Activated CD4-positive, alpha-beta T cell treated with anti-CD3 and anti-CD28 coated beads for 36 hours (primary cell): ENCODE measurements at regions of chr16 and their contacts with region 1.

Region 1: GRCh38 chr16:85935974-85936760 is 37.2 kb downstream of the IRF8 start:
- DNase-seq: peak; percentile 90
- ATAC-seq: peak; percentile 83
- H3K4me3 Mint-ChIP-seq: peak overlapping the region; percentile 49
- H3K27ac Mint-ChIP-seq: peak overlapping the region; percentile 84
- H3K4me1 Mint-ChIP-seq: peaks cover 63% of the 10 kb centered on the region
- H3K27me3 Mint-ChIP-seq: no peaks in the 10 kb centered on the region

Region 2: GRCh38 chr16:85055503-85056210 is 880.5 kb before region 1 on chr16:
- CTCF ChIA-PET with region 1: no interaction called
- POLR2A ChIA-PET with region 1: no interaction called
- intact Hi-C with region 1: loop called in 1 of 2 experiments (anchors 1 kb)
- DNase-seq: peak; percentile 88
- ATAC-seq: peak; percentile 92
- H3K4me3 Mint-ChIP-seq: peak overlapping the region; percentile 61
- H3K27ac Mint-ChIP-seq: peak overlapping the region; percentile 88
- H3K4me1 Mint-ChIP-seq: peaks cover 57% of the 10 kb centered on the region
- H3K27me3 Mint-ChIP-seq: no peaks in the 10 kb centered on the region

Region 3: DNA sequence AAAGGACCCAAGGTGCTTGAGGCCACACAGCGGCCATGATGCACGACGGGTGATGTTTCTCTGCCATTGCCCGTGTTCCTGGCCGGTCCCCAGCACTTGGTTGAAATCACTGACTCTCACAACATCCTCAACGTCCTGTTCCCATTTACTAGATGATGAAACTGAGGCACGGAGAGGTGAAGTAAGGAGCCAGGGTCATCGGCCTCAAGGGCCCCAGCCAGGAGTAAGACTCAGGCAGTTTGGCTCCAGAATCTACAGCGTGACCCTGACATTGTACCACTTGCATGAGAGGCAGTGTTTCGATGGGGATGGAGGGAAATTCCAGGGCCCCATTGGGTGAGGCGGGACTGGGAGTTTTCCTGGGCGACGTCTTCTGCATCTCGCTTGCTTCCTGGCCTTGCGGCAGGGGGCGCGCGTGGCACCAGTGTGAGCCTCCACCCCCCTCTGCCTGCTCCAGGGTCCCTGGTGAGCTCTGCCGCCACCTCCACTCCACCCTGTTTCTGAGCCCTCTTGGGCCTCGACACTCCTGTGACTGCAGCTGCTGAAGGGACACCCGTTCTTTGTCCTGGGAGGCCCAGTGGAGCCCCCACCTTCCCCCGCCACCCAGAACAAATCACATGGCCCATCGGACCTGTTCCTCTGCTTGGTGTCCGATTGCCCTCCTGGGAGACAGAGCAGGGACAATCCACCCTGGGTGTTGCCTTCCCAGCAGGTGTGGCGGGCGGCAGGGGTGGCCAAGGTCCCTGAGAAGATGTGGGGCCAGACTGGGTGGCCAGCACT is 456.0 kb before region 1 on chr16:
- CTCF ChIA-PET with region 1: no interaction called
- POLR2A ChIA-PET with region 1: no interaction called
- intact Hi-C with region 1: no loop called
- DNase-seq: peak; percentile 31
- ATAC-seq: no peak
- H3K4me3 Mint-ChIP-seq: no peak overlapping the region
- H3K27ac Mint-ChIP-seq: no peak overlapping the region
- H3K4me1 Mint-ChIP-seq: no peaks in the 10 kb centered on the region
- H3K27me3 Mint-ChIP-seq: no peaks in the 10 kb centered on the region

Region 4: GRCh38 chr16:85869785-85870558 is 66.2 kb before region 1 on chr16:
- CTCF ChIA-PET with region 1: no interaction called
- POLR2A ChIA-PET with region 1: no interaction called
- intact Hi-C with region 1: loop called in 1 of 2 experiments (anchors 1 kb)
- DNase-seq: no peak
- ATAC-seq: peak; percentile 19
- H3K4me3 Mint-ChIP-seq: peak overlapping the region; percentile 0
- H3K27ac Mint-ChIP-seq: peak overlapping the region; percentile 6
- H3K4me1 Mint-ChIP-seq: peaks cover 32% of the 10 kb centered on the region
- H3K27me3 Mint-ChIP-seq: peaks cover 7% of the 10 kb centered on the region

Region 5: DNA sequence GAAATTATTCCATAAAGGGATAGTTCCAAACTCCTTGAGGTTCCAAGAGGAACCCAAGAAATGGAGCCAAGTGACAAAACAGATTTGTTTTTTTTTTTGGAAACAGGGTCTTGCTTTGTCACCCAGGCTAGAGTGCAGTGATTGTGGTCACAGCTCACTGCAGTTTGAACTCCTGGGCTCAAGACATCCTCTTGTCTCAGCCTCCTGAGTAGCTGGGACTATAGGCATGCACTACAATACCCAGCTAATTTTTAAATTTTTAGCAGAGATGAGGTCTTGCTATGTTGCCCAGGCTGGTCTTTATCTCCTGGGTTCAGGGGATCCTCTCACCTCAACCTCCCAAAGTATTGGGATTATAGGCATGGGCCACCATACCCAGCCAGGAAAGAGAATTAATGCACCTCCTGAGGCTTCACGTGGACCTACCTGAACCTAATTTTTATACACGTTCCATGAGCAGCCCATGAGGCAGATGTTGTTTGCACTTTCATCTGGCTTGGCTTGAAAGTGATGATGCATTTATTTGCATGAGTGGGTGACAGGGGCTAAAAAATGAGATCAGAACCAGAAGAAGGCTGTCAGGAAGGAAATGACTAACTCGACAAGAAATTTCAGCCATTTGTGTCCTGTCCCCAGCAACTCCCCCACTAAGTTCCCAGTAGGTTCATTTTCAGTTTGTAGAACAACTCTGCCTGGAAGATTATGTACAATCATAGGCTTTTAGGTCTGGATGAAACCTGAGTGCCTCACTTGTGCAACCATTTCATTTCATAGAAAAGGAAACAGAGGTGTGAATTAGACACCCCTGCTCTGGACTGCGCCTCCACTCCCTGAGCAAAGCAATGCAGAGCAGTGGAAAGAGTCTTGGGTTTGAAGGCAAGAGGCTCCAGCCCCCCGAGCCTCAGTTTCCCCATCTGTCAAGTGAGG is 47.5 kb before region 1 on chr16:
- CTCF ChIA-PET with region 1: no interaction called
- POLR2A ChIA-PET with region 1: no interaction called
- intact Hi-C with region 1: loop called (anchors 1 kb)
- DNase-seq: peak; percentile 61
- ATAC-seq: peak; percentile 92
- H3K4me3 Mint-ChIP-seq: peak overlapping the region; percentile 7
- H3K27ac Mint-ChIP-seq: peak overlapping the region; percentile 77
- H3K4me1 Mint-ChIP-seq: peaks cover 39% of the 10 kb centered on the region
- H3K27me3 Mint-ChIP-seq: peaks cover 31% of the 10 kb centered on the region

Region 6: DNA sequence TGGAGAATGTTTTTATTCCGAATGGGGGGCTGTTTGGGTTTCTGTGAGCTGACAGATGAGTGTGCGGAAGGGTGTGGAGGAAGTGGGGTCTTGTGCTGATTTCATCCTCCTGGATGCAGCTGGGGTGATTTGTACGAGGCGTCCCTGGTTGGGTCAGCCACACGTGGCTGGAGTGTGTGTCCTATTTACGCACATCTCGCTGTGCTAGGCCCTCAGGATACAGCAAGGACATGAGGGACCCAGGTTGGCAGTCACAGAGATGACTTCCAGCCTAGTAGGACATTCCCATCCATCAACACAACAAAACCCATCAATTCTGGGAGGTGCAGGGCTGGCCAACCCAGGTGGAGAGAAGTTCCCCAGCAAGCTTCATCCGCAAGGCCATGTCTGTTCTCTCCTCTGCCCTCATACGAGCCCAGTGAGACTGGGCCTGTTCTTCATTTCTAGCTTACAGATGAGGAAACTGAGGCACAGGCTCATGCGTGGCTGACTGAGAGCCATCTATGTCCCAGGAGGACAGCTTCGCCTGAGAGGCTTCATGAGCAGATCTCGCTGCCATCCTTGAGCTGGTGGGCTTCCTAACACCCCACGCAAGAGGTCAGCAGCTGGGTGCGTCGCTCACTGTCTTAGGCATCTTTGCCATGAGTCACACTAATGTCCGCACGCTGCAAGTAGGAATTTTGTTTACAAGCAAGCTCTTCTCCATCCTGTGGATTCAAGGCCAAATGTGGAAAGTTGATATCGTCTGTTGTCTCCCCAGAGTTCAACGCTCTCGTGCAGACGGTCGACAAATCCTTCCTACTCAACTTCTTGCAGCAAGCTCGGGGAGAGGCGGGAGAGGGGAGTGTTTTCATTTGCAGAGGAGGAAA is 12.8 kb before region 1 on chr16:
- CTCF ChIA-PET with region 1: interaction called, 3 read pairs
- POLR2A ChIA-PET with region 1: interaction called, 4 read pairs
- intact Hi-C with region 1: loop called (anchors 1 kb)
- DNase-seq: peak; percentile 26
- ATAC-seq: peak; percentile 12
- H3K4me3 Mint-ChIP-seq: no peak overlapping the region
- H3K27ac Mint-ChIP-seq: peak overlapping the region; percentile 58
- H3K4me1 Mint-ChIP-seq: peaks cover 39% of the 10 kb centered on the region
- H3K27me3 Mint-ChIP-seq: peaks cover 6% of the 10 kb centered on the region

Region 7: GRCh38 chr16:85969159-85969558 is 33.0 kb after region 1 on chr16:
- CTCF ChIA-PET with region 1: no interaction called
- POLR2A ChIA-PET with region 1: no interaction called
- intact Hi-C with region 1: loop called in 1 of 2 experiments (anchors 1 kb)
- DNase-seq: peak; percentile 35
- ATAC-seq: peak; percentile 78
- H3K4me3 Mint-ChIP-seq: no peak overlapping the region
- H3K27ac Mint-ChIP-seq: peak overlapping the region; percentile 26
- H3K4me1 Mint-ChIP-seq: peaks cover 39% of the 10 kb centered on the region
- H3K27me3 Mint-ChIP-seq: no peaks in the 10 kb centered on the region

Region 8: DNA sequence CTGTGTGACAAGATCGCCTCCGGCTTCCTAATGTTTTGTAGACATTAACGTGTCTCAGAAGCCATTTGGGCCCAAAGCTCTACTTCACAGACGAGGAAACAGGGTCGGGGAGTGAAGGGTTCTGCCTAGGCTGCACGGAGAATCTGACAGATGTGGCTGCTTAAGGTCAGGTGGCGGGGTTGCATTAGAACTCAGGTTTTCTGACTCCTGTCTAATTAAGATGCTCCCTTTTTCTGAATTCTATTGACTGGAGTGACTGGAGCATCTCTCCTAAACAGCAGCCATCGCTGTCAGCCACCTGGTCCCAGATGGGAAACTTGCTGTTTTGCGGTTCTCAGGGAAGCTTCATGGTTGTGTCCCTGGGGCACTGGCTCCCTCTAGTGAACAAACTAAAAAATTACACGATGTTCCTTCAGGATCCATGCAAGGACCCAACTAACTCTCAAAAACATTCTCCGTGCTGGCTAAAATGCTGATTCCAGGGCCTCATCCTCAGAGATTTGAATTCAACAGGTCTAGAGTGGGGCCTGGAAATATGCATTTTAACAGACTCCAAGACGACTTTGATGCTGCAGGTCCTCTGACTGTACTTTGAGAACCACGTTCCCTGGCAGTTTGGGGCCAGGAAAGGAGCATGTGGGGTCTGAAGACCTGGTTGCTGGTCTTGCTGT is 80.2 kb after region 1 on chr16:
- CTCF ChIA-PET with region 1: interaction called, 4 read pairs
- POLR2A ChIA-PET with region 1: no interaction called
- intact Hi-C with region 1: loop called in 1 of 2 experiments (anchors 1 kb)
- DNase-seq: peak; percentile 64
- ATAC-seq: peak; percentile 75
- H3K4me3 Mint-ChIP-seq: no peak overlapping the region
- H3K27ac Mint-ChIP-seq: no peak overlapping the region
- H3K4me1 Mint-ChIP-seq: peaks cover 20% of the 10 kb centered on the region
- H3K27me3 Mint-ChIP-seq: peaks cover 34% of the 10 kb centered on the region